ENCODE measurements at regions of chr19 and their contacts with region 1.

Region 1: GRCh38 chr19:46288896-46289588 is 7.8 kb upstream of the HIF3A start:
- DNase-seq: no peak
- ATAC-seq: no peak

Region 2: DNA sequence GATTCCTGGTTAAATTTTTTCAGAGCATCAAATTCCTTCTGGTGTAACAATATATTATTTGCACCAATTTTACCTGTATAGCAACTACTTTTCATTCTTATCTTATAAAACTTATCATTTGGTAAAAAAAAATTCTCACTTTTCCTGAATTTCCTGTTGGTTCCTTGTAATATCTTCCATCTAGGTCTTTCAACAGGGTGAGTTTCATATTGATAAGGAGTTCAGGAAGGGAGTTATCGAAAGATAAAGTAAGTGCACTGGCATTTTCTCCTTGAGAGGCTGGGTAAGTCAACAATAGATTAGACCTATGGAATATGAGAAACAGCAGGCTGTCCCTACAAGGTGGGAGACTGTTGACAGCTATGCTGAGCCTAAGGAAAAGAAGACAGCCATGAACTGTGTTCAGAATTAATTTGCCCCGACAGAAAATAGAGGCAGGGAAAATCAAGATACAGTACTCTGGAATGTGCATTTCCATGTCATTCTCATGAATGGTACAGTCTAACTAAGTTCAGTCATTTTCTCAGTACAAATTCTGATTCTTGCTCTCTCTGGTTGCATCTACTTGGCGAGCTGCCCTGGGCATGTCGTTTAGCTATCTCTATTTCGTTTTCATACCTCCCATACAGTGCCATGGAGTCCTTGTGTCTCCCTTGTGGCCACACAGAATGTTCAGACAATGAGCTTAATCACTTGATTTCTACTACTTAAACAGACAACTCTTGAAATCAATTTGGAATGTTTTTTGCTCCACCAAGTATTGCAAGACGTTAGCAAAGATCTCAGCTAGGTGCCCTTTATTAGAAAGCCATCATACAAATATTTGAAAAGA is 49.6 kb before region 1 on chr19:
- intact Hi-C with region 1: no loop called
- DNase-seq: no peak
- ATAC-seq: no peak

Region 3: GRCh38 chr19:46346821-46347571 is 58.0 kb after region 1 on chr19 and contains the start of gene PPP5C:
- intact Hi-C with region 1: loop called (anchors 10 kb)
- DNase-seq: peak; percentile 92
- ATAC-seq: peak; percentile 89
- total RNA-seq, gene PPP5C: 46.9 TPM

Region 4: GRCh38 chr19:47081111-47081510 is 792.1 kb after region 1 on chr19:
- intact Hi-C with region 1: no loop called
- DNase-seq: no peak
- ATAC-seq: no peak

Measured in sciatic nerve (tissue), 2 donors.